ENCODE measurements at regions of chr12 and their contacts with region 1.

Region 1: GRCh38 chr12:13875744-13876143 is 105.7 kb downstream of the GRIN2B start:
- DNase-seq: no peak
- H3K4me3 ChIP-seq: no peak overlapping the region
- H3K27ac ChIP-seq: no peak overlapping the region
- H3K4me1 ChIP-seq: no peaks in the 10 kb centered on the region
- H3K27me3 ChIP-seq: peaks cover 0 to 4% (median 0%) of the 10 kb centered on the region in 4 donors
- CTCF ChIP-seq: no peak
- POLR2A ChIP-seq: no peak

Region 2: DNA sequence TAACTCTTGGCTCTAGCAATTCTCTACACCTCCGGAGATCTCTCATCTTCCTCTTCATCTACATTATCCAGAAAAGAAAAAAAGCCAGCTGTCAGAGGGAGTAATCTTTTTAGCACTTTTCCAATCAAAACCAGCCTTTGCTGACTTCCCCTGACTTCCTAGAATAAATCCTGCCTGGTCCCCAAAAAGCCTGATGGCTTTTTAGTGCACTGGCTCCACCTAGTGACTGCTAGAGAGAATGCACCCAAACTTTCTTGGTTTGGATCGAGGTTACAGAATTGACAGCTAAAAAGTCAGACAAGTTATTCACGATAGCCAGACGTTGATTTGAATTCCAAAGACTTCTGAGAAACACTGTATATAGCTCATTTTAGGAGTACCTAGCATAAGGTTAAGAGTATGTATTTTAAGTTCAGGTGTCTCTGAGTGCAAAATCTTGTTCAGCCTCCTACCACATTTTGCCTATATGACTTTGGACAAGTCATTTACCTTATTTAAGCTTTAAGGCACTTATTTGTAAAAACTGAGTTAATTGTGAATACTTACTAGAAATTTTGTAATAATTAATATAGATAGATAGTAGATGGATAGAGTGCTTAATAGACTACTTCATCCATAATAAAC is 291.4 kb after region 1 on chr12:
- intact Hi-C with region 1: loop called (anchors 5 kb)
- DNase-seq: no peak
- H3K4me3 ChIP-seq: no peak overlapping the region
- H3K27ac ChIP-seq: no peak overlapping the region
- H3K4me1 ChIP-seq: no peaks in the 10 kb centered on the region
- H3K27me3 ChIP-seq: no peaks in the 10 kb centered on the region
- CTCF ChIP-seq: peak; percentile 77 to 89 (median 80)
- POLR2A ChIP-seq: no peak

Measured in esophagus squamous epithelium (tissue), 5 donors.